ENCODE measurements at regions of chr1 and their contacts with region 1.

Region 1: DNA sequence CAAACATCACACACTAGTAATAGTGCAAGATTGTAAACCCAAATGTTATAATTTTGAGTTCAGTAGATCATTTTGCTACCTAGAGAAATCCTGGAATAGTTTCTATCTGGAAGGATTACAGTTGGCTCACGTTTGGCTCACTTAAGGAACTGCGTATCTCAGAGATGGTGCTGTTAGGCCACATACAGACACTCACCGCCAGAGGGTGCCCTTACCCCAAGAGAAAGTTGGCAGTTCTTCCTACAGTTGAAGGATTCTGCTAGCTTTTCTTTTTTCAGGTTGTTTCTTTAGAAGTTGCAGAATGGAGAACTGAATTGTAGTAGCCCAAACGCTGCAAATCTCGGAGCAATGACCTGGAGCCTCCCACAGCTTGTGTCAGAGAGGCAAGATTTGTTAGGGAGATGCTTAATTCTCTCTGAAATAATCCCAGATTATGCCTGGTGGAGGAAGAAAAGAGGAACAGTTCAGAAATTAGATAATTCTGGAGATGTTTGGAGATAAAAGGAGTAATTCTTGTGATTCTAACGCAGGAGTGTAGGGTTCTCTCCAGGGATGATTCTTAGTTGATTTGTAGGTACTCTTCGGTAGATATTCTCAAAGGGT is 87.9 kb upstream of the PAPPA2 start:
- DNase-seq: no peak
- H3K4me3 ChIP-seq: no peak overlapping the region
- H3K27ac ChIP-seq: no peak overlapping the region
- H3K4me1 ChIP-seq: no peaks in the 10 kb centered on the region
- H3K27me3 ChIP-seq: no peaks in the 10 kb centered on the region
- CTCF ChIP-seq: peak; percentile 69 to 81 (median 75)
- EP300 ChIP-seq: no peak
- POLR2A ChIP-seq: no peak

Region 2: GRCh38 chr1:176073524-176074157 is 301.4 kb before region 1 on chr1:
- intact Hi-C with region 1: no loop called
- DNase-seq: no peak
- H3K4me3 ChIP-seq: no peak overlapping the region
- H3K27ac ChIP-seq: no peak overlapping the region
- H3K4me1 ChIP-seq: no peaks in the 10 kb centered on the region
- H3K27me3 ChIP-seq: no peaks in the 10 kb centered on the region
- CTCF ChIP-seq: peak; percentile 23 to 59 (median 41)
- EP300 ChIP-seq: no peak
- POLR2A ChIP-seq: no peak

Region 3: GRCh38 chr1:176271572-176271971 is 103.5 kb before region 1 on chr1:
- intact Hi-C with region 1: no loop called
- DNase-seq: no peak
- H3K4me3 ChIP-seq: no peak overlapping the region
- H3K27ac ChIP-seq: no peak overlapping the region
- H3K4me1 ChIP-seq: no peaks in the 10 kb centered on the region
- H3K27me3 ChIP-seq: no peaks in the 10 kb centered on the region
- CTCF ChIP-seq: no peak
- EP300 ChIP-seq: no peak
- POLR2A ChIP-seq: no peak

Region 4: GRCh38 chr1:176285996-176286395 is 89.1 kb before region 1 on chr1:
- intact Hi-C with region 1: no loop called
- DNase-seq: no peak
- H3K4me3 ChIP-seq: no peak overlapping the region
- H3K27ac ChIP-seq: no peak overlapping the region
- H3K4me1 ChIP-seq: no peaks in the 10 kb centered on the region
- H3K27me3 ChIP-seq: no peaks in the 10 kb centered on the region
- CTCF ChIP-seq: no peak
- EP300 ChIP-seq: no peak
- POLR2A ChIP-seq: no peak

Region 5: GRCh38 chr1:176479971-176480370 is 104.9 kb after region 1 on chr1:
- intact Hi-C with region 1: no loop called
- DNase-seq: no peak
- H3K4me3 ChIP-seq: no peak overlapping the region
- H3K27ac ChIP-seq: no peak overlapping the region
- H3K4me1 ChIP-seq: no peaks in the 10 kb centered on the region
- H3K27me3 ChIP-seq: no peaks in the 10 kb centered on the region
- CTCF ChIP-seq: no peak
- EP300 ChIP-seq: no peak
- POLR2A ChIP-seq: no peak

Region 6: DNA sequence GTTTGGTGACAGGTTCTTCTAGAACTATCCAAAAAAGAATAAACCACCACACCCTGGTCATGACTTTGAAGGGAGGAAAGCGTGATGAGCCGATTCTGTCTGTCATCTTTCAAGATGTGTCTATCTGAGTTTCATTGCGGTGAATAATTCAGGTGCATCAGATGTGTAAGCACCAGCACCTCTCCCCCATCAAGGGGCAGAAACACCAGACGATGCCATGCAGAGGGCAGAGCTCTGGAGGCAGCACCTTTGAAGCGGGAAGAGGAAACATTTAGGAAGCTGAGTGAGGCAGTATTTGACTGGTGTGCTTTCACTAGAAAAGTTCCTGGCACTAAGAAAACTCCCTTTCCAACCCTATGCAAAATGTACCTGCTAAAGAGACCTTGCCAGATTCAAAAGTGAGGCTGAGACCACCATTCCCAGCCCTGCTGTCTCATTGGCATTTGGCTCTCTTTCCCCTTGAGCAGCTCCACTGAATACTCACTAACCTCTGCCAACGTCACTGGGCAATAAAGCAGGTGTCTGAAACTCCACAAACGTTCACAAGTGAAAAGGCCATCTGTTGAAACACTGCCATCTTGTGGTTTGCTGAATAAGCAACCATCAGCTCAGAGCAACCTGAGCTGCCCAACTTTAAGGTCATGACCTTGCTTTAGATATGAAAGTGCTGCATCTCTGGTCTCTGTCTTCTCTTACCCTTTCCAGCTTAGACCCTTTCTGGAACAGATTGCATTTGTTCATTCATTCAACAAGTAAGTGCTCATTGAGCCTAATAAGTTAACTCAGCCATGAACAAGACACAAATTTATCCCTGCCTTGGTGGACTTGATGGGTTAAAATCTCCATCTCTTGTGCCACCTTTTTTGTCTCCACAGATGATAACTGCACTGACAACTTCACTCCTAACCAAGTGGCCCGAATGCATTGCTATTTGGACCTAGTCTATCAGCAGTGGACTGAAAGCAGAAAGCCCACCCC is 316.5 kb after region 1 on chr1:
- intact Hi-C with region 1: loop called (anchors 10 kb)
- DNase-seq: no peak
- H3K4me3 ChIP-seq: no peak overlapping the region
- H3K27ac ChIP-seq: no peak overlapping the region
- H3K4me1 ChIP-seq: peaks cover 10 to 31% (median 17%) of the 10 kb centered on the region in 4 donors
- H3K27me3 ChIP-seq: no peaks in the 10 kb centered on the region
- CTCF ChIP-seq: peak; percentile 47 to 65 (median 49)
- EP300 ChIP-seq: no peak
- POLR2A ChIP-seq: no peak

Region 7: DNA sequence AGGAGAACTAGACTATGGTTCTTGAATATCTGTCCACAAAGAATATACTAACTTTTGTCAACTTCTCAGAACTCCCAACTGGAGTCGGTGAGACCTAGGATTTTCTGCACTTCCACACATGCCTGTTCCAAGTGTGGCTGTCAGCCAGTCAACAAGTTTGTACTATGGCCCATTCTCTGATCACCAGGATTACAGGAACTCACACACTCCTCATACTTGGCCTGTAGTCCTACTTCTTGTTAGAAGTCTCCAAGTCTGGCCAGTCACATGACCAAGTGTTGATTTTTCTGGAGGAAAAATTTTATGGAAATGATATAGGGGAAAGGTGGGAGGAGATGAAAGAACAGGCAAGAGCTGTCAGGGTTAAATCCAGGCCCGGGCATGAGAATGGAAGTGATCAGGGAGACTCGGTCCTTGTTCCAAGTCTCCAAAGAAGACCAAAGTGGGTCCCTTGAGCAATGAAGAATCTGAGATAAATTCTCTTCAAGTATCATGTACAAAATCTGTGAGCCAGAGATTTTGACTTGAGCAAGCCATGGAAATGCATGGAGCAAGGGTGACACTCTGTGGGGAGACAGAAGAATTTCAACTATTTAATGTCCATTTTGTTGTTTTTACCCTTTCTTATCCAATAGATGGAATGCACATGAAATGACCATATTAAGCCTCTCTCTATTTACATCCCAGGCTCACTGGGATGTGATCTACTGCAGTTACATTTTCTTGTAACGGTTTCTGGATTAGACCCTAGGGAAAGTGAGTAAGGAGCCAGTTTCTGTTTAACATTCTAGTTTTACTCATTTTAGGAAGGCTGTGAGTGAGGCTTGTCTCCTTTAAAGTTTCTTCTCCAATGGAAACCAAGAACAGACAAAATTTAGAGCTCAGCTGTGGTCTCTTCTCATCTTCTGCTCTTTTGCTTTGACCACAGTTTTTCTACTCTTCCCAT is 468.6 kb after region 1 on chr1:
- intact Hi-C with region 1: loop called (anchors 5 kb)
- DNase-seq: no peak
- H3K4me3 ChIP-seq: no peak overlapping the region
- H3K27ac ChIP-seq: no peak overlapping the region
- H3K4me1 ChIP-seq: peaks cover 0 to 3% (median 0%) of the 10 kb centered on the region in 4 donors
- H3K27me3 ChIP-seq: no peaks in the 10 kb centered on the region
- CTCF ChIP-seq: peak; percentile 44 to 52 (median 46)
- EP300 ChIP-seq: no peak
- POLR2A ChIP-seq: no peak

Region 8: GRCh38 chr1:176880954-176881595 is 506.0 kb after region 1 on chr1:
- intact Hi-C with region 1: loop called (anchors 2 kb)
- DNase-seq: no peak
- H3K4me3 ChIP-seq: no peak overlapping the region
- H3K27ac ChIP-seq: no peak overlapping the region
- H3K4me1 ChIP-seq: peaks cover 3 to 5% (median 4%) of the 10 kb centered on the region in 4 donors
- H3K27me3 ChIP-seq: no peaks in the 10 kb centered on the region
- CTCF ChIP-seq: peak; percentile 78 to 84 (median 81)
- EP300 ChIP-seq: no peak
- POLR2A ChIP-seq: no peak

Measured in esophagus muscularis mucosa (tissue), 4 donors.